Right ventricle myocardium inferior (tissue), 1 donor: ENCODE measurements at regions of chr10 and their contacts with region 1.

Region 1: DNA sequence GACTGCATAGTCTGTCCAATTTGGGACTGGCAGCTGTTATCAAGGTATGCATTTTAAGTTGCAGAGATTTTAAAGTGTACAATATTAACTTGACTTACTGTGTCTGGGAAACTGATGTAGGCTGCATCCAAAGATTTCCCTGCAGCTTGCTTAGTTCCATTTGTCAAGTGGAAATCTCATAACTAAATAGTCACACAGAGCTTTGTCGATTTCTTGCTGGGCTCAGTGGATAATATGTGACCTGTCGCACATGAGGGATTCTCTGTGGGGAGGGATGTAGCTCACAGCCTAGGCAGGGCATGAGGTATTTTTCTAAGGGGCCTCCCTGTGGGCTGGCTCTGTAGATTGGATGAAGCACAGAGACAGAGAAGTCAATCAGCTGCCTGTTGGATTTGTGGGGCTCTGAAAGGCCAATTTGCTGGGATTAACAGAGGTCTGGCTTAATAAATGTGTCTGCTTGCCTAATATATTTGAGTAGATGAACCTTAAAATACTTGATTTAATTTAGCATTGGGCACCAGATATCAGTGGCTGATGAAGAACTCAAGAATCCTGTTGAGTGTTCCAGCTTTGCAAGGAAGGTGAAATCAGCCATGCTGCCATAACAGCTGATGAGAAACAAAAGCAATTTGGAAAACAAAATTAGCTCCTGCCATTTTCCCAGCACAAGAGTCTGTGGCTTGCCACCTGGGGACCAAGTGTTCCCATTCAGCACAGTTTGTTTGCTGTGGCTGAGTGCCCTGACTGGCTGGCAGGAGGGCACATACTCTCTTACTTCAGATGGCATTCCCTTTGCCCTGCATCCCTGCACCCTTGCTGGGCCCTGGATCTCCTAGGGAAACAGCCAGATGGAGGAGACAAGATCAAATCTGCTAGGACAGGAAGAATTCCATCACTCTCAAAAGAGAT is 598.5 kb downstream of the SORCS3 start:
- DNase-seq: no peak
- ATAC-seq: peak; percentile 94

Region 2: DNA sequence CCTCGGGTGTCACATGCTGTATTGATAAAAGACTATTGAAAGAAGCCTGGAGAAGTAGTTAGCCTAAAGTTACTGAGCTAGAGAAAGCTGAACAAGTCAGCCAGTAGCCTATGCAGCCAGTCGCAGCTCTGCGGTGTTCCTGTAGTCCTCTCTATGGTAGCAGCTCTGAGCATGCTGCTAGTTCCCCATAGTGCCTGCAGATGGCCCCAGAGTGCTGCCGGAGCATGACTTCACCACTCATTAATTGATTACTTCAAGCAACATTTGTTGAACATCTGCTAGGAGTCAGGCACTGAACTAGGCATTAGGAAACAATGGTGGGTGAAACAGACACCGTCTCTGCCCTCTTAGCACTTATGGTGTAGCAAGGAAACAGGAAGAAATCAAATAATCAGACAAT is 175.8 kb before region 1 on chr10:
- intact Hi-C with region 1: no loop called
- DNase-seq: no peak
- ATAC-seq: peak; percentile 74

Region 3: GRCh38 chr10:105210546-105210945 is 29.0 kb before region 1 on chr10:
- intact Hi-C with region 1: loop called (anchors 1 kb)
- DNase-seq: no peak
- ATAC-seq: no peak

Region 4: GRCh38 chr10:105549731-105550130 is 310.2 kb after region 1 on chr10:
- intact Hi-C with region 1: no loop called
- DNase-seq: no peak
- ATAC-seq: no peak